ENCODE measurements at regions of chr6 and their contacts with region 1.

Region 1: DNA sequence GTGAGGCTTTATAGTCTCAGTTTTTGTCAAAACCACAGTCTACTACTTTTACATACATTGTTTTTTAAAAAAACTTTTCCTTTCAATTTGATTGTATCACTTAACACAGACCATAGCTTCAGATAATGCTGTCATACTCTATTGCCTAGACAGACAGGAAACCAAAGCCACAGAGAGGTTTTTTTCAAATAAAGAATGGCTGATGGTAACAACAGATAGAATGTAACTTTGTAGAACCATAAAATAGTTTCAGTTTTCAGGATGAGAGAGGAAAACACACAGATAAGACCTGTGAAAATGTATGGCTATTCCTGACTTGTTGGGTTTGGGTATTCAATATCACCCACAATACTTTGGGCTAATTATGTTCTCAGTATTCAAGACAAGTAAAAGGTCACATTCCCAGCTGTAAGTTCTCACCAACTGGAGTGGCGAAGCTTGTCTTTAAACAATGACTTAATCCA is 94.0 kb downstream of the ADGRG6 start:
- DNase-seq: no peak
- H3K4me3 Mint-ChIP-seq: peak overlapping the region; percentile 10
- H3K27ac Mint-ChIP-seq: no peak overlapping the region
- H3K4me1 Mint-ChIP-seq: peaks cover 17% of the 10 kb centered on the region
- H3K27me3 Mint-ChIP-seq: peaks cover 18% of the 10 kb centered on the region

Region 2: GRCh38 chr6:142275251-142276006 is 120.4 kb before region 1 on chr6:
- CTCF ChIA-PET with region 1: no interaction called
- POLR2A ChIA-PET with region 1: no interaction called
- intact Hi-C with region 1: no loop called
- DNase-seq: no peak
- H3K4me3 Mint-ChIP-seq: no peak overlapping the region
- H3K27ac Mint-ChIP-seq: no peak overlapping the region
- H3K4me1 Mint-ChIP-seq: no peaks in the 10 kb centered on the region
- H3K27me3 Mint-ChIP-seq: no peaks in the 10 kb centered on the region

Region 3: DNA sequence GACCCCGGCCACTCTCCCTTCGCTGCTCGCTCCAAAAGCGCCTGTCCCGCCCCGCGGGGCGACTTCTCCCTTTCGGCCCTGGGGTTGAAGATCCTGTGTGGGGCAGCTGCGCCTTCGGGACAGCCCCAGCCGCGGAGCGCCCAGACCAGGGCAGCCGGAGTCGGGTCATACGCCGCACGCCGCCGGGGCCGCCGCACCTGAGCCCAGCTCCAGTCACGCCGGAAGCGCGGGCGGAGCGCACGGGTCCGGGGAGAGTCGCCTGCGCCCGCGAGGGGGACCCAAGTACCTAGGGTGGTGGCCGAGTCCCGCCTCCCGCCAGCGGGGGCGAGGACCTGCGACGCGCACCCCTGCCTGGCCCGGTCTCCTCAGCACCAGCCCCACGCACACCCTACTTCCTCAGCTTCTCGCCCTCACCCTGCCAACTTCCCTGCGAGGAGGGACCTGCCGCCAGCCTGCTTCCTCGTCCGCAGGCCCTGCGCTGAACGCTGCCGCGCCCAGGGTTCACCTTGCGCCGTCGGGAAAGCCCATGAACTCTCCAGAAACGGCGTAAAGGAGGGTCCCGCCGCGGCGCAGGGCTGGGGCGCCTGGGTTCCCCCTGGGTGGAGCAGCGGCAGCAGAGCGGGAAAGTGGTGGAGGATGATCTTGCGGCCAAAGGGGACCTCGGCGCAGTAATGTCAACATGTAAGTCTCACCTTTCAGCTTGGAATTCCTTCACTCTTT is 94.0 kb before region 1 on chr6 and contains the start of gene ADGRG6:
- CTCF ChIA-PET with region 1: no interaction called
- POLR2A ChIA-PET with region 1: no interaction called
- intact Hi-C with region 1: loop called (anchors 5 kb)
- DNase-seq: peak; percentile 58
- H3K4me3 Mint-ChIP-seq: peak within 1 kb of the TSS; percentile 76
- H3K27ac Mint-ChIP-seq: no peak within 1 kb of the TSS
- H3K4me1 Mint-ChIP-seq: peaks cover 2% of the 10 kb centered on the region
- H3K27me3 Mint-ChIP-seq: peaks cover 26% of the 10 kb centered on the region
- total RNA-seq, gene ADGRG6: 0.12 to 0.55 TPM

Region 4: DNA sequence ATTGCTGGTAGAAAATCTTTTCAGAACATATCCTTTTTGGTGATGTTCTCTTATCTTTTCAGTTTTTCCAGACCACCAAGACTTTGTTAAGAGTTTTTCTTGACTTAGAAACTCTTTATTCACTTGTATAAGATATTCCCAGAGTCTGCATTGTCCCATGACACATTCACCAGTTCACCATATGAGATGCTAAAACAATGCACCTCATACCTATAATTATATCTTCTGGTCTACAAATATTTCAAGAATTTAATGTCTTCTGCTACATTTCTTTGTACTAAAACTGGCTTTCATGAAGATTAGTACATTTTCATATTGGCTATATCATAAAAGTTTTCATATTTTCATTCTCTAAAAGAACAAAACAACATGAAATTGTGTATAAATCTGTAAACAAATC is 17.3 kb after region 1 on chr6:
- CTCF ChIA-PET with region 1: no interaction called
- POLR2A ChIA-PET with region 1: no interaction called
- intact Hi-C with region 1: loop called (anchors 1 kb)
- DNase-seq: no peak
- H3K4me3 Mint-ChIP-seq: no peak overlapping the region
- H3K27ac Mint-ChIP-seq: no peak overlapping the region
- H3K4me1 Mint-ChIP-seq: peaks cover 11% of the 10 kb centered on the region
- H3K27me3 Mint-ChIP-seq: peaks cover 16% of the 10 kb centered on the region

Region 5: DNA sequence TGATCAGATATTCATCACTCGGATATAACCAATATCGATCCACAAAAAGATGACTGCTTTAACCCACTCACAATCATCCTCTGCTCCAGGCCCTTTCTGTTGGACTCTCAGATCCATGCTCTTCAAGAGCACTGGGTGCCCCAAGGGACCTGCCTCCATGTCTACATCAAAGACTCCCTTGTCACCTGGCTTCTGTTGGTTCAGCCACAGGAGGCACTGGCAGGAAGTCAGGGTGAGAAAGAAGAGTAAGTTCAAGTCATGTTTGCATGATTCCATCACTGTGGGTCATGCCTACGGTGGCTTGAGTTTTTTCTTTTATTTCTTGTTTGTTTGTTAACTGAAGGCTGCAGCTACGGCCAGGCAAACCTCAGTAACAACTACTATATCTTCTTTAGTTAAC is 149.3 kb after region 1 on chr6:
- CTCF ChIA-PET with region 1: no interaction called
- POLR2A ChIA-PET with region 1: no interaction called
- intact Hi-C with region 1: loop called (anchors 1 kb)
- DNase-seq: peak; percentile 15
- H3K4me3 Mint-ChIP-seq: no peak overlapping the region
- H3K27ac Mint-ChIP-seq: no peak overlapping the region
- H3K4me1 Mint-ChIP-seq: peaks cover 23% of the 10 kb centered on the region
- H3K27me3 Mint-ChIP-seq: peaks cover 2% of the 10 kb centered on the region

Measured in activated CD4-positive, alpha-beta memory T cell treated with anti-CD3 and anti-CD28 coated beads for 36 hours (primary cell).